ENCODE measurements at regions of chr16 and their contacts with region 1.

Region 1: GRCh38 chr16:75251280-75252048 is at the start of gene BCAR1:
- DNase-seq: peak; percentile 50 to 89
- H3K4me3 ChIP-seq: peak within 1 kb of the TSS; percentile 64 to 87 (median 68)
- H3K27ac ChIP-seq: peak within 1 kb of the TSS; percentile 84
- H3K4me1 ChIP-seq: peaks cover 13 to 76% (median 64%) of the 10 kb centered on the region in 4 experiments
- H3K27me3 ChIP-seq: no peaks in the 10 kb centered on the region; a peak in 1 of 7 replicates
- CTCF ChIP-seq: no peak
- EP300 ChIP-seq: no peak
- POLR2A ChIP-seq: no peak; a peak in 1 of 3 replicates
- RAD21 ChIP-seq: no peak
- total RNA-seq, gene BCAR1: 103 and 105 TPM in 2 replicates

Region 2: GRCh38 chr16:75265845-75266701 is 14.6 kb after region 1 on chr16:
- CTCF ChIA-PET with region 1: interaction called, 11 read pairs
- POLR2A ChIA-PET with region 1: interaction called, 158 read pairs
- DNase-seq: peak in 1 of 2 experiments; percentile 93
- H3K4me3 ChIP-seq: peak overlapping the region; percentile 76 to 99 (median 83)
- H3K27ac ChIP-seq: no peak overlapping the region; the same call in 1 of the 2 replicates
- H3K4me1 ChIP-seq: peaks cover 0 to 31% (median 23%) of the 10 kb centered on the region in 4 experiments; a peak in 6 of 7 replicates
- H3K27me3 ChIP-seq: no peaks in the 10 kb centered on the region
- CTCF ChIP-seq: no peak
- EP300 ChIP-seq: no peak
- POLR2A ChIP-seq: peak in 1 of 2 experiments; percentile 65; a peak in 2 of 3 replicates
- RAD21 ChIP-seq: peak; percentile 40 to 44

Region 3: GRCh38 chr16:75272097-75272551 is 20.7 kb after region 1 on chr16:
- CTCF ChIA-PET with region 1: interaction called, 11 read pairs
- POLR2A ChIA-PET with region 1: interaction called, 158 read pairs
- DNase-seq: no peak
- H3K4me3 ChIP-seq: no peak overlapping the region
- H3K27ac ChIP-seq: no peak overlapping the region
- H3K4me1 ChIP-seq: no peaks in the 10 kb centered on the region
- H3K27me3 ChIP-seq: no peaks in the 10 kb centered on the region
- CTCF ChIP-seq: no peak
- EP300 ChIP-seq: no peak
- POLR2A ChIP-seq: no peak
- RAD21 ChIP-seq: no peak

Region 4: DNA sequence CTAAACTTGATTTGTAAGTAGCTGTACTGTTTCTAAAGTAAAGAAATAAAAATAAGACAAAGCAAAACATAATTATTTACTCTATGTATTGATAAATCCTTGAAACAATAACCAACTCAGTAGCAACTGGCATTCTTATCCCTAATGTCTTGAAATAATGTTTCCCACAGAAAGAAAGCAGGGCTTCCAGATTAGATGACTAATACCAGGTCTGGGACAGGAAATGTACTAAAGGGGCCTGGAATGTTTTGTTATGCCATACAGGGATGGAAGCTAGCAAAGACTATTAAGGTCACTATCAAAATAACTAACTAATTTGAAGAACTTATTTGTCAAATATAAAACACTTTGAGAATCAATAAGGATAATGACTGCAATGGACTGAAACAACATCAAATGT is 99.7 kb after region 1 on chr16:
- CTCF ChIA-PET with region 1: no interaction called
- POLR2A ChIA-PET with region 1: no interaction called
- DNase-seq: no peak
- H3K4me3 ChIP-seq: no peak overlapping the region
- H3K27ac ChIP-seq: no peak overlapping the region
- H3K4me1 ChIP-seq: no peaks in the 10 kb centered on the region
- H3K27me3 ChIP-seq: no peaks in the 10 kb centered on the region
- CTCF ChIP-seq: no peak
- EP300 ChIP-seq: no peak
- POLR2A ChIP-seq: no peak
- RAD21 ChIP-seq: no peak

Measured in H1 (cell line).